Vagina (tissue), 2 donors: ENCODE measurements at regions of chr7 and their contacts with region 1.

Region 1: GRCh38 chr7:1569833-1570633 is at the start of gene PSMG3:
- DNase-seq: peak in 1 of 2 donors; percentile 89
- H3K4me3 ChIP-seq: peak within 1 kb of the TSS; percentile 95 to 97
- H3K27ac ChIP-seq: peak within 1 kb of the TSS; percentile 93
- H3K4me1 ChIP-seq: peaks cover 49% of the 10 kb centered on the region
- H3K27me3 ChIP-seq: no peaks in the 10 kb centered on the region
- CTCF ChIP-seq: peak in 1 of 3 experiments; percentile 13
- POLR2A ChIP-seq: peak in 1 of 2 donors; percentile 66
- total RNA-seq, gene PSMG3: 49.6 TPM

Region 2: DNA sequence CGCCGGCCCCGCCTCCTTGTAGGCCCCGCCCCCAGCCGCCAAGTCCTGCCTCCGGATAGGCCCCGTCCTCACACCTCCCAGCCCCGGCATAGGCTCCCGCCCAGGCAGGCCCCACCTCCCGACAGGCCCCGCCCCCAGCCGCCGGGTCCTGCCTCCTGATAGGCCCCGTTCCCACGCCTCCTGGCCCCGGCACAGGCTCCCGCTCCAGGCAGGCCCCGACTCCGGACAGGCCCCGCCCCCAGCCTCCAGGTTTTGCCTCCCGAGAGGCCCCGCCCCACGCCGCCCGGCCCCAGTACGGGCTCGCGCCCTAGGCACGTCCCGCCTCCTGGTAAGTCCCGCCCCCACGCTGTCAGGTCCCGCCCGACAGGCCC is 110.5 kb before region 1 on chr7:
- intact Hi-C with region 1: no loop called
- DNase-seq: peak; percentile 99
- H3K4me3 ChIP-seq: peak overlapping the region; percentile 89 to 91
- H3K27ac ChIP-seq: peak overlapping the region; percentile 88
- H3K4me1 ChIP-seq: peaks cover 82% of the 10 kb centered on the region
- H3K27me3 ChIP-seq: no peaks in the 10 kb centered on the region
- CTCF ChIP-seq: no peak
- POLR2A ChIP-seq: no peak

Region 3: GRCh38 chr7:1503816-1504775 is 65.9 kb before region 1 on chr7 and contains the start of gene INTS1:
- intact Hi-C with region 1: loop called (anchors 10 kb)
- DNase-seq: no peak
- H3K4me3 ChIP-seq: peak within 1 kb of the TSS; percentile 82 to 84
- H3K27ac ChIP-seq: peak within 1 kb of the TSS; percentile 37
- H3K4me1 ChIP-seq: peaks cover 26% of the 10 kb centered on the region
- H3K27me3 ChIP-seq: no peaks in the 10 kb centered on the region
- CTCF ChIP-seq: peak; percentile 87 to 95 (median 92)
- POLR2A ChIP-seq: no peak
- total RNA-seq, gene INTS1: 67.3 TPM

Region 4: DNA sequence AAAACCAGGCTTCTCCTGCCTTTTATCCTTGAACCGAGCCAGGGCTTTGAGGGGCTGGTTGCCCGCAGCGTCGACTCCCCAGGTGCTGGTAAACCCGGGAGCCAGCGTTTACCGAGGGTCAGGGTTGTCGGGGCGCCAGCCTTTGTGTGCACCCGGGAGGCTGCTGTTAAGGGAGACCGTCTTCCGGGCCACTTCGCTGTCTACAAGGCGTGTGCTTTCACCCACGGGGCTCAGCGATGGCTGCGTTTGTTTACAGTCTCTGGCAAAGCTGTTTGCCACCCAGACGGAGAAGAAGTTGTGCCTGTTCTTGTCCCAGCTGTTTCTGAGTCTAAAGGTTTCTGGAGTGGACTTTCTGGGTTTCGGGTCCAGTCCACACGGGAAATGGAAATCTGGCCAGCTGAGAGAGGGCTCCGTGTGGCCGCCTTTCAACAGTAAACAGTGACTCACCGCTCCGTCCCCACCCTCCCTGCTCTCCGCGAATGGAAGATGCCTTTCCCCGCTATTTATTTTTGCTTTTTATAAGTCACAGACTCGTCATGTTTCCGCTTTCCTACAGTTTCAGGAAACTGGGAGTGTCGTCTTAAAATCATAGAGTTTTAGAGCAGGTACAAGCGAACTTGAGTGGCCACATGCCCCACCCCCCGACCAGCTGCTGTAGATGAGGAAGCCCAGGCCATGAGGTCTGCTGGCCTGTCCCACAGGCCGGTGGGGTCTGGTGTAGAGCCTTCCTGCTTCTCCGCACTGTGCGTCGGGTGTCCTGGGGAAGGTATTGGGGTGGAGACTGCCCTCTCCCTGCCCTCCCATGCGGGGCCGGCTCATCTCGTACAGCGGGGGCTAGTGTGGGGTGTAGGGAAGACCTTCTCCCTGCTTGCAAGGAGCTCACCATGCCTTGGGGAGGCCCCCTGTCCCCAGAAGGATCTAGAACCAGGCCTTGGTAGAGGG is 37.3 kb before region 1 on chr7:
- intact Hi-C with region 1: loop called (anchors 5 kb)
- DNase-seq: no peak
- H3K4me3 ChIP-seq: peak overlapping the region; percentile 70 to 95
- H3K27ac ChIP-seq: peak overlapping the region; percentile 99
- H3K4me1 ChIP-seq: peaks cover 61% of the 10 kb centered on the region
- H3K27me3 ChIP-seq: no peaks in the 10 kb centered on the region
- CTCF ChIP-seq: no peak
- POLR2A ChIP-seq: peak in 1 of 2 donors; percentile 62

Region 5: GRCh38 chr7:2354186-2354938 is 784.3 kb after region 1 on chr7 and contains the start of gene EIF3B:
- intact Hi-C with region 1: loop called (anchors 10 kb)
- DNase-seq: peak in 1 of 2 donors; percentile 92
- H3K4me3 ChIP-seq: peak within 1 kb of the TSS; percentile 99 to 100
- H3K27ac ChIP-seq: peak within 1 kb of the TSS; percentile 99
- H3K4me1 ChIP-seq: peaks cover 53% of the 10 kb centered on the region
- H3K27me3 ChIP-seq: no peaks in the 10 kb centered on the region
- CTCF ChIP-seq: peak in 1 of 3 experiments; percentile 6
- POLR2A ChIP-seq: peak in 1 of 2 donors; percentile 21
- total RNA-seq, gene EIF3B: 90.8 TPM